ENCODE measurements at regions of chr22 and their contacts with region 1.

Region 1: DNA sequence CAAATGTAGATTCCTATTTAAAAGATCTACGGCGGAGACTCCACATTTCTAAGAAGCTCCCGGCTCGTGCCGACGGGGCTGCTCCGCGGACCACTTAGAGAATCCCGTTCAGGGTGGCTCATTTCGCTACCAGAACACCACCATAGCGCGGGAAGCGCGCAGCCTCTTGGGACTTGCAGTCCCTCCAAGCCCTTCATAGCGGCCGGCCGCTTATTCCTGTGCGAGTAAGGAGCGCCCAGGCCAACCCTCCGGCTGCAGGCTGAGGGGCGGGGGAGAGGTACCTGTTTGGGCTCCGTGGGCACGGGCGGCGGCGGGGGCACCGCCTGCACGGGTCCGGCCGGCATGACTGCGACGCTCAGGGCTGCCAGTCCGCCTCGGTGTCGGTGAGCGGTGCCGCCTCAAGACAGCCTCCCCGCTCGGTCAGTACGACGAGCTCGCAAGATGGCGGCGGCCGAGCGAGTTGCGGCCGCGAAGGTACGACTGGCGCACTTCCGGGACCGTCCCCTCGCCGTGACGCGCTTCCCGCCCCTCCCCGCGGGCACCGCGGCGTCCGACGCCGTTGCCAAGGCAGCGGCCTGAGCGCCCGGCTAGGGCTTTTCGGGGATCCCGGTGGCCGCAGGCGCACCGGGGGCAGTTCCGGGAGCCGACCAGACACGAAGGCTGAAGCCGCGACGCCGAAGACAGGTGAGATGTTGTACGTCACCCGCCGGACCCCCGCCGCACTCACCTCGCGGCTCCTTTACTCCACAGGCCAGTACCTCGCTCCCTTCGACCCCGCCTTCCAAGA is at the starts of genes CCDC157 and SF3A1:
- DNase-seq: peak; percentile 86 to 90 (median 89)
- H3K4me3 ChIP-seq: peak within 1 kb of the TSS; percentile 82 to 94
- H3K4me3 Mint-ChIP-seq: peak within 1 kb of the TSS; percentile 93 to 98 (median 97)
- H3K27ac ChIP-seq: peak within 1 kb of the TSS; percentile 96
- H3K27ac Mint-ChIP-seq: peak within 1 kb of the TSS; percentile 94 to 99 (median 98)
- H3K4me1 ChIP-seq: peaks cover 47% of the 10 kb centered on the region
- H3K4me1 Mint-ChIP-seq: peaks cover 25 to 60% (median 46%) of the 10 kb centered on the region in 4 donors
- H3K27me3 ChIP-seq: no peaks in the 10 kb centered on the region
- H3K27me3 Mint-ChIP-seq: no peaks in the 10 kb centered on the region
- total RNA-seq, gene CCDC157: 2.1 to 3.0 TPM
- total RNA-seq, gene SF3A1: 279 to 301 TPM

Region 2: GRCh38 chr22:30296833-30297232 is 59.8 kb before region 1 on chr22:
- CTCF ChIA-PET with region 1: no interaction called
- POLR2A ChIA-PET with region 1: interaction called, 118 read pairs
- intact Hi-C with region 1: no loop called
- DNase-seq: no peak
- H3K4me3 ChIP-seq: no peak overlapping the region
- H3K4me3 Mint-ChIP-seq: peak overlapping the region in 5 of 8 donors; percentile 30 to 59 (median 49)
- H3K27ac ChIP-seq: peak overlapping the region; percentile 20
- H3K27ac Mint-ChIP-seq: peak overlapping the region; percentile 76 to 94 (median 89)
- H3K4me1 ChIP-seq: peaks cover 60% of the 10 kb centered on the region
- H3K4me1 Mint-ChIP-seq: peaks cover 30 to 63% (median 51%) of the 10 kb centered on the region in 4 donors
- H3K27me3 ChIP-seq: no peaks in the 10 kb centered on the region
- H3K27me3 Mint-ChIP-seq: no peaks in the 10 kb centered on the region

Region 3: DNA sequence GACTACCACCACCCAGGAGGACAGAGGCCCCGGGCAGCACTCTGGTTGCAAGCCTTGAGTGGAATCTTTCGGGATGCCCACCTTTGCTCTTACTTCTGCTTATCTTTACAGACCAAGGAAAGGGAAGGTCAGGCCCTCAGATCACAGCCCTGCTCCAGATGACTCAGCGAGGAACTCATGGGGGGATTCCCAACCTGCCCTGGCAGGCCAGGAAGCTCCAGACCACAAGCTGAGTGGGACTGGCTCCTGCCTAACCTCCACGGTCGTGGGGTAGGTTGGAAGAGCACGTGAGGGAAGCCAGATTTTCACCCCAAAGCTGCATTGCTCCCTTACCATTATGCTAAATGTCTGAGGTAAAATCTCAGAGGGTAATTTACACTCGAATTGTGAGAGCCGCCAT is 41.7 kb before region 1 on chr22:
- CTCF ChIA-PET with region 1: interaction called, 3 read pairs
- POLR2A ChIA-PET with region 1: interaction called, 12 read pairs
- intact Hi-C with region 1: no loop called
- DNase-seq: peak in 2 of 5 donors; percentile 38 to 83
- H3K4me3 ChIP-seq: no peak overlapping the region
- H3K4me3 Mint-ChIP-seq: peak overlapping the region in 7 of 8 donors; percentile 39 to 79 (median 52)
- H3K27ac ChIP-seq: peak overlapping the region; percentile 44
- H3K27ac Mint-ChIP-seq: peak overlapping the region; percentile 82 to 95 (median 89)
- H3K4me1 ChIP-seq: peaks cover 99% of the 10 kb centered on the region
- H3K4me1 Mint-ChIP-seq: peaks cover 86 to 100% (median 93%) of the 10 kb centered on the region in 4 donors
- H3K27me3 ChIP-seq: no peaks in the 10 kb centered on the region
- H3K27me3 Mint-ChIP-seq: no peaks in the 10 kb centered on the region

Region 4: DNA sequence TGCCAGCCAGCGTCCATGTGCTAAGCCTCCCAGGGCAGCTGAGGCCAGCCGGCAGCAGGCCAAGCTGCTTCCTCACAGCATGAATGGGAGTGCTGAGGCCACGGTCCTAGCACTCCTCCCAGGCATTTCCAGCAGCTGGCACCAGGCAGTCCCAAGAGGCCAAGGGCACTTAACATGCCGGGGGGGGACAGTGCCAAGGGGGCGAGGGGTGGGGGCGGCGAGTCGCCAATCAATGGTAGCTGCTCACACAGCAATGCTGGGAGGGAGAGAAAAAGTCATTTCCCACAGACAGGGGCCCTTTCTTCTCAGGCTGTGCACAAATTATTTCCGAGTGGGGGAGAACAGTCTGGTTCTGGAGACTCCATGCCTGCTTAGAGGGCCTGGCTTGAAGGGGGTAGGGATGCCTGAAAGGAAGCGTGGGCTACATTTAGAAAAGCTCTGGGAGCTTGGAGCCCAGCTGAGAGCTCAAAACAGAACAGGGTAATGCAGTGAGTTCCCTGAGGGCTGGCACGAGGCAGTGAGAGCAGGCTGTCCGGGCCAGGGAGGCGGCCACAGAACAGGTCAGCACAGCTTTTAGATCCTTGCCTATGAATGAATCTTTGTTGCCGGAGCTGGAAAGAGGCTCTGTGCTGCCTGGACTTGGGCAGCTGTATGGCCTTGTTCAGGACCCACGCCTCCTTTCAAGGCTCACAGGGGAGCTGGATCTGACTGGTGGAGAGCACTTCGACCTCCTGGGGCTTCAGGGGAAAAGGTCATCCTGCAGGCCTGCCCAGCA is 15.5 kb before region 1 on chr22:
- CTCF ChIA-PET with region 1: no interaction called
- POLR2A ChIA-PET with region 1: interaction called, 12 read pairs
- intact Hi-C with region 1: no loop called
- DNase-seq: no peak
- H3K4me3 ChIP-seq: no peak overlapping the region
- H3K4me3 Mint-ChIP-seq: no peak overlapping the region
- H3K27ac ChIP-seq: no peak overlapping the region
- H3K27ac Mint-ChIP-seq: no peak overlapping the region
- H3K4me1 ChIP-seq: peaks cover 22% of the 10 kb centered on the region
- H3K4me1 Mint-ChIP-seq: peaks cover 12 to 18% (median 16%) of the 10 kb centered on the region in 4 donors
- H3K27me3 ChIP-seq: no peaks in the 10 kb centered on the region
- H3K27me3 Mint-ChIP-seq: no peaks in the 10 kb centered on the region

Measured in CD4-positive, alpha-beta memory T cell (primary cell).